ENCODE measurements at regions of chr19 and their contacts with region 1.

Region 1: GRCh38 chr19:48795055-48795684 is 15.7 kb downstream of the BCAT2 start:
- DNase-seq: peak; percentile 98

Region 2: GRCh38 chr19:48698046-48698445 is 97.1 kb before region 1 on chr19:
- in situ Hi-C with region 1: no loop called
- DNase-seq: peak; percentile 51

Region 3: DNA sequence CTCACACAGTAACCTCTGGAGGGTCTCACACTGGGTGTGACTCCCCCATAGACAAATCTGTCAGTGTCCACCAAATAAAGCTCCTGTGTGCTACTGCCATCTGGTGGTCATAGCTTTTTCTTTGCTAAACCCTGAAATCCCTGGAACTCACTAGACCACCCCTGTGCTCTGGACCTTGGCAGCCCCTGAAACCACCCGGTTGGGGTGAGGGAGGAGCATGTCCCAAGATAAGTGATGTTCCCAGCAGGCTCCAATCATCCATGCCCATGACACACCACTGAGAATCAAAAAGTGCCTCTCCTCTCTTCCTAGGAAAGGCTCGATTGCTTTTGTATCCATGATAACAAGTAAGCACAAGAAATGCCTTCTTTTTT is 47.6 kb after region 1 on chr19:
- in situ Hi-C with region 1: loop called (anchors 10 kb)
- DNase-seq: peak; percentile 77

Region 4: DNA sequence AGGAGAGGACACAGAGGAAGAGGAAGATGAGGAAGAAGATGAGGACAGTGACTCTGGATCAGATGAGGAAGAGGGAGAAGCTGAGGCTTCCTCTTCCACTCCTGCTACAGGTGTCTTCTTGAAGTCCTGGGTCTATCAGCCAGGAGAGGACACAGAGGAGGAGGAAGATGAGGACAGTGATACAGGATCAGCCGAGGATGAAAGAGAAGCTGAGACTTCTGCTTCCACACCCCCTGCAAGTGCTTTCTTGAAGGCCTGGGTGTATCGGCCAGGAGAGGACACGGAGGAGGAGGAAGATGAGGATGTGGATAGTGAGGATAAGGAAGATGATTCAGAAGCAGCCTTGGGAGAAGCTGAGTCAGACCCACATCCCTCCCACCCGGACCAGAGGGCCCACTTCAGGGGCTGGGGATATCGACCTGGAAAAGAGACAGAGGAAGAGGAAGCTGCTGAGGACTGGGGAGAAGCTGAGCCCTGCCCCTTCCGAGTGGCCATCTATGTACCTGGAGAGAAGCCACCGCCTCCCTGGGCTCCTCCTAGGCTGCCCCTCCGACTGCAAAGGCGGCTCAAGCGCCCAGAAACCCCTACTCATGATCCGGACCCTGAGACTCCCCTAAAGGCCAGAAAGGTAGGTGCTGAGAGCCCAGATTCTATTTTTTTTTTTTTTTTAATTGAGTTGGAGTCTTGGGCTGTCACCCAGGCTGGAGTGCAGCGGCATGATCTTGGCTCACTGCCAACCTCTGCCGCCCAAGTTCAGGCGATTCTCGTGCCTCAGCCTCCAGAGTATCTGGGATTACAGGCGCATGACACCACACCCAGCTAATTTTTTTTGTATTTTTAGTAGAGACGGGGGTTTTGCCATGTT is 79.3 kb after region 1 on chr19:
- in situ Hi-C with region 1: no loop called
- DNase-seq: peak; percentile 46

Region 5: DNA sequence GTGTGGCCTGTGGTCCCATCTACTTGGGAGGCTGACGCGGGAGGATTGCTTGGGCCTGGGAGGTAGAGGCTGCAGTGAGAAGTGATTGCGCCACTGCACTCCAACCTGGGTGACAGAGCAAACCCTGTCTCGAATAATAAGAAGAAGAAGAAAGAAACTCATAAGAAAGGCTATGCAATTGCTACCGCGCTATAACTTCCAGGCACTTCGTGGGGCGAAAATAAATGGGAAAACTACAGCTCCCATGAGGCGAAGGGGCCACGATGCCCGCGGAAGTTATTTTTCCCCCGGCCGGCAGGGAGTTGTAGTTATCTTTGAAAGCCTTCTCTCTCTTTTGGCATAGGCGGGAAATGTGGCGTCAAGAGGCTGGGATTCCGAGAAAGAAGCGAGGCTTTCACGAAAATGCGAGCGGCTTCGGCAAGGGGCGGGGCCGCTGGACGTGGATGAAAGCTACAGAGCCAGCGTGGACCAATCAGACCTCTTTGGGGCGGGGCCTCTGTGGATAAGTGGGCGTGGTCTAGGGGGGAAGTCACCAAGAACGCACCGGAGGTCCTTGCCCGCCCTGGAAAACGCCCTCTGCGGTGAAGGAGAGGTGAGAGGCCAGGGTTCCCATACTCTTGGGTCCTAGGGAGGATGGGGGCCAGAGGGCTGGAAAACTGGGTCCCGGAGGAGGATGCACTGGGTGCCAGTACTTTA is 104.8 kb after region 1 on chr19 and contains the start of gene NUCB1:
- in situ Hi-C with region 1: loop called (anchors 10 kb)
- DNase-seq: peak; percentile 99
- total RNA-seq, gene NUCB1: 201 and 252 TPM in 2 replicates